Kidney (tissue), 22 donors: ENCODE measurements at regions of chr1 and their contacts with region 1.

Region 1: GRCh38 chr1:36420836-36421664 is 23.3 kb upstream of the LSM10 start:
- DNase-seq: peak; percentile 88 to 92 (median 90)
- H3K4me3 ChIP-seq: no peak overlapping the region
- H3K27ac ChIP-seq: no peak overlapping the region
- H3K4me1 ChIP-seq: no peaks in the 10 kb centered on the region
- H3K27me3 ChIP-seq: no peaks in the 10 kb centered on the region
- CTCF ChIP-seq: peak; percentile 92

Region 2: GRCh38 chr1:36342481-36343478 is 78.3 kb before region 1 on chr1:
- intact Hi-C with region 1: loop called (anchors 5 kb)
- DNase-seq: no peak
- H3K4me3 ChIP-seq: no peak overlapping the region
- H3K27ac ChIP-seq: no peak overlapping the region
- H3K4me1 ChIP-seq: peaks cover 0 to 12% (median 0%) of the 10 kb centered on the region in 3 donors
- H3K27me3 ChIP-seq: no peaks in the 10 kb centered on the region
- CTCF ChIP-seq: peak; percentile 76